ENCODE measurements at regions of chr6 and their contacts with region 1.

Region 1: GRCh38 chr6:24394780-24395437 is 7.8 kb upstream of the MRS2 start:
- DNase-seq: no peak
- H3K4me3 ChIP-seq: no peak overlapping the region
- H3K27ac ChIP-seq: no peak overlapping the region
- H3K4me1 ChIP-seq: no peaks in the 10 kb centered on the region
- H3K27me3 ChIP-seq: no peaks in the 10 kb centered on the region
- CTCF ChIP-seq: no peak
- POLR2A ChIP-seq: no peak

Region 2: DNA sequence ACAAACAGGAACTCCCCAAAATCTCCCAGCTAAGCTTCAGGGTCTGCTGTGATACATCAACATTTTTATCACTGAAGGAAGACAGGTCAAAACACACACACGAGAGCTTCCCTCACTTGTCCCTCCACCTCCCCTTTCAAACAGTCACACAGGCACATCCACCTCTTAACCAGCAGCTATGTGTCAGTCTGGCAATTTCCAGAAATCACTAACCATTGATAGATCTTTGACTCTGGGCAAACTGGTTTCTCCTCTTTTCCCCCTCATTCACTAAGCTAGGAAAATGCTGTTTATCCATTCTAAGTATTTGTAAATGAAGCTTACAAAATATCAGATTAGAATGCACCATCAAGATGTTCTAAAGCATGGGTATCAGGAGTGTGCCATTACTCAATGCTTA is 124.9 kb before region 1 on chr6:
- intact Hi-C with region 1: no loop called
- DNase-seq: peak in 1 of 2 donors; percentile 9
- H3K4me3 ChIP-seq: no peak overlapping the region
- H3K27ac ChIP-seq: no peak overlapping the region
- H3K4me1 ChIP-seq: peaks cover 21 to 27% of the 10 kb centered on the region in 2 donors
- H3K27me3 ChIP-seq: no peaks in the 10 kb centered on the region
- CTCF ChIP-seq: no peak
- POLR2A ChIP-seq: no peak

Region 3: DNA sequence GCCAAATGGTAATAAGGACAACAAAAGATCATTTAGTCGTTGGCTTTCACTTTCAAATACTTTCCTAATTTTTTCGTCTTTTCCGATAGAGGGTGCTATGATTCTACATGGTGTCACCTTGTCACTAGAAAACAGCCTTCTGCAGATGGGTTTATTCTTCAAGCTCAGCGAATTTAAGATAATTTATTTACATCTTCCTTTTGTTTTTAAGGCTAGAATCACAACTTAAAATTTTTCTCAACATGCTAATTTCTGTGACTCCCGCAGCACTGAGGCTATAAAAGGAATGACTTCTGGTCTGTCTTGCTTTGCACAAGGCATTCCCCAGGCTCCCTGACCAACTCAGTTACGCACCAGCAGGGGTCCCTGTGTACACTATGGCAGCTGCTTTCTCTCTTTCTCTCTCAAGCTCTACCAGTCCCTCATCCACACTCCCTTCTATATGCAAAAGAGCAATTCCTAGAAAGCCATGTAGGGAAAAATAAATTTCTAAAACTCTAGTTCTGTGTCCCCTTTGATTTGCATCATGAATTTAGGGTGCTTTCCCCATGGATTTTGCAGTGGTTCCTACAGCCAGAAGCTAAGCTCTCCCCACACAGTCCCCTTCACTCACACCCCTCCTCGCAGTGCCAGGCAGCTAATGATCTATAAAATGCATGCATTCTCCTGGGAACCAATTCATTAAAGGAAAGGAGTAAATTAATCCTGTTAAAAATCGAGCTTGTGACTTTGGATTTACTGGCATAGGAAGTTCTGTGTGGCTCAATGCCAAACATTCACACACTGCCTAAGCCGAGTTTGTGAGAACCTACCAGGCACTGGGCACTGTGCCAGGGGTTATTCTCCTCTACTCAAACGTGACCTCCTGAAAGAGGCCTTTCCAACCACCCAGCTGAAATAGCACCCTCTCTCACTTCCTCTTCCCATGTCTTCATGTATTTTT is 111.6 kb before region 1 on chr6:
- intact Hi-C with region 1: loop called (anchors 5 kb)
- DNase-seq: peak; percentile 95 to 97
- H3K4me3 ChIP-seq: no peak overlapping the region
- H3K27ac ChIP-seq: peak overlapping the region in 2 of 3 donors; percentile 10 to 11
- H3K4me1 ChIP-seq: peaks cover 3 to 10% of the 10 kb centered on the region in 2 donors
- H3K27me3 ChIP-seq: no peaks in the 10 kb centered on the region
- CTCF ChIP-seq: peak; percentile 19 to 93 (median 63)
- POLR2A ChIP-seq: no peak

Region 4: GRCh38 chr6:24332306-24332705 is 62.6 kb before region 1 on chr6:
- intact Hi-C with region 1: no loop called
- DNase-seq: peak; percentile 60 to 64
- H3K4me3 ChIP-seq: no peak overlapping the region
- H3K27ac ChIP-seq: peak overlapping the region in 2 of 3 donors; percentile 37 to 43
- H3K4me1 ChIP-seq: peaks cover 3 to 10% of the 10 kb centered on the region in 2 donors
- H3K27me3 ChIP-seq: no peaks in the 10 kb centered on the region
- CTCF ChIP-seq: no peak
- POLR2A ChIP-seq: no peak

Region 5: DNA sequence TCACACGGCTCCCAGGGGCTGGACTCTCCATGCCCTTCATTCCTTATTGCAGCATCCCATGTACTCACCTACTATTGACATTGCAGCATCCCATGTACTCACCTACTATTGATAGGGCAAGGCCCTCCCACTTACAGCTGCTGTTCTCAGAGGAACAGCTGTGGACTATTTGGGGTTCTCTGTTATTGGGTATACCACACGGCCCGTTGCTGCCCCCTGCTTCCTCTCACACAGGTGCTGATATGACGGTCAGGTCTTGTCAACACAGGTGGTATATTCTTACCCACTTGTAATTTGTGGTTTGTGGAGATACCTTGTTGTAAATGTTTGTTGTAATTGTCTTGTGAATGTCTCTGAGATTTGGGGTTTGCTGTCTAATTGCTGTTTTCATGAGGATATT is 118.7 kb after region 1 on chr6:
- intact Hi-C with region 1: no loop called
- DNase-seq: no peak
- H3K4me3 ChIP-seq: no peak overlapping the region
- H3K27ac ChIP-seq: no peak overlapping the region
- H3K4me1 ChIP-seq: no peaks in the 10 kb centered on the region
- H3K27me3 ChIP-seq: no peaks in the 10 kb centered on the region
- CTCF ChIP-seq: no peak
- POLR2A ChIP-seq: no peak

Measured in thyroid gland (tissue), 4 donors.